Mammary epithelial cell (primary cell): ENCODE measurements at regions of chr19 and their contacts with region 1.

Region 1: DNA sequence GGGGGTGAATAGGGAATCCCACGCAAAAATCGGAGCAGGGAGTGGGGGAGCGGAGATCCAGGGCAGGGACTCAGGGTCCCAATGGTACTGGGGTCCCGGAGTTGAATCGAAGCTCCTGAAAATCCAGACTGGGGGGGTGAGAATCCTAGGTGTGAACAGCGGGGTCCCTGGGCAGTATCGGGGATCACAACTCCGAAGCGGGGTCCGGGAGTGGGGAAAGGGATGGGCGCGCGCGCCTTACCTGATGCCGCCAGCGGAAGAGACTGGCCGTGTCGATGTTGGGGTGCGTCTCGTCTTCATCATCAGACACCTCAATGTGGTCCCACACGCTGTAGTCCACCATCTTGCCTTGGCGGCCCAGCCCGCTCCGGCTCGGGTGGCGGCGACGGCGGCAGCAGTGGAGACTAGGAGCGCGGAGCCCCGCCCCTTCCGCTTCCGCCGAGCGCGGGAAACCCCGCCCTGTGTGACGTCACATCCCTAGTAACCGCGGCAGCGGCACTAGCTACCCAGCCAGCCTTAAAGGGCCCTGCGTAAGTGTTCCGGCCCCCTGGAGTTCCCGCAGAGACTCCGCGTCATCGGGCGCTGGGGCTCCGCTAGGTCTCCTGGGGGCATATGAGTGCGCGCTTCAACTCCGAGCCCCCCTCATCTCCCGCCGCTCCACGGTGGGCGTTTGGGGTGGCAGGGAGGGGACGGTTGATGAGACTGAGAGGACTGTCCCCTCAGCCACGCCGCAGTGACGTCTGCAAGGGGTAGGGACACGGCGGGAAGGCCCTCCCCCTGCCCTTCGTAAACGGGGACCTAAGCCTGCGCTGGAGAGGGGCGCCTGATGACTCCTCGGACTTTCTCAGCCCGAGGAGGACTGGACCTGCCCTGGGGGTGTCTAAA is at the start of gene CDC37:
- DNase-seq: peak; percentile 94
- H3K4me3 ChIP-seq: peak within 1 kb of the TSS; percentile 85 to 94 (median 92)
- H3K27ac ChIP-seq: peak within 1 kb of the TSS; percentile 84
- H3K4me1 ChIP-seq: peaks cover 24% of the 10 kb centered on the region
- H3K27me3 ChIP-seq: peaks cover 3% of the 10 kb centered on the region
- CTCF ChIP-seq: no peak
- total RNA-seq, gene CDC37: 114 to 217 TPM

Region 2: GRCh38 chr19:10356431-10356830 is 46.9 kb before region 1 on chr19:
- CTCF ChIA-PET with region 1: no interaction called
- dilution Hi-C with region 1: loop called (anchors 5 kb)
- in situ Hi-C with region 1: no loop called
- intact Hi-C with region 1: no loop called
- DNase-seq: no peak
- H3K4me3 ChIP-seq: no peak overlapping the region
- H3K27ac ChIP-seq: no peak overlapping the region
- H3K4me1 ChIP-seq: no peaks in the 10 kb centered on the region
- H3K27me3 ChIP-seq: no peaks in the 10 kb centered on the region
- CTCF ChIP-seq: no peak

Region 3: GRCh38 chr19:10424011-10424637 is 20.7 kb after region 1 on chr19:
- CTCF ChIA-PET with region 1: interaction called, 3 read pairs
- dilution Hi-C with region 1: no loop called
- in situ Hi-C with region 1: no loop called
- intact Hi-C with region 1: loop called (anchors 1 kb)
- DNase-seq: peak; percentile 64
- H3K4me3 ChIP-seq: peak overlapping the region in 2 of 3 experiments; percentile 18 to 29
- H3K27ac ChIP-seq: no peak overlapping the region
- H3K4me1 ChIP-seq: peaks cover 20% of the 10 kb centered on the region
- H3K27me3 ChIP-seq: peaks cover 24% of the 10 kb centered on the region
- CTCF ChIP-seq: peak; percentile 73 to 87

Region 4: DNA sequence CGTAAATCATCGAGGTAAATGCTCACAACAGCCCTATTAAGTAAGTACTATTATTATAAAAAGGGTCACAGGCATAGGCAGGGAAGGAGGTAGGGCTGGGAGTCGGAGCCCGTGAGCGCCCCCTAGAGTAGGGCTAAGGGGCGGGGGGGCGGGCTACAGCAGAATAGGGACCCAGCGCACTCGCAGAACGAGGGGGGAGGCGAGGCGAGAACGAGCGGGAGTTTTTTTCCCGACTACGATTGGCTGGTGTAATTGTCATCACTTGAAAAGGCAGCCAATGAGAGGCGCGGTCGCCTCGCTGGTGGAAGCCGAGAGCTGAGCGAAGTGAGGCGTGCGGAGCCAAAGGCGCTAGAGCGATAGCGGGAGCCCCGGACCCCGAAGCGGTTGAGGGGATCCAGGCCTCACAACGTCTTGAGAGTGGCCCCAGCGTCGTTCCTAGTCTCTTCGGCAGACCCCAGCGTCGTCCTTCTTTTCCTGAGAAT is 75.6 kb after region 1 on chr19:
- CTCF ChIA-PET with region 1: no interaction called
- dilution Hi-C with region 1: no loop called
- in situ Hi-C with region 1: no loop called
- intact Hi-C with region 1: loop called (anchors 5 kb)
- DNase-seq: peak; percentile 82
- H3K4me3 ChIP-seq: peak overlapping the region in 2 of 3 experiments; percentile 27 to 35
- H3K27ac ChIP-seq: no peak overlapping the region
- H3K4me1 ChIP-seq: peaks cover 5% of the 10 kb centered on the region
- H3K27me3 ChIP-seq: no peaks in the 10 kb centered on the region
- CTCF ChIP-seq: peak in 1 of 2 donors; percentile 39

Region 5: GRCh38 chr19:10551698-10552301 is 148.4 kb after region 1 on chr19:
- CTCF ChIA-PET with region 1: no interaction called
- dilution Hi-C with region 1: no loop called
- in situ Hi-C with region 1: no loop called
- intact Hi-C with region 1: loop called (anchors 5 kb)
- DNase-seq: peak; percentile 51
- H3K4me3 ChIP-seq: no peak overlapping the region
- H3K27ac ChIP-seq: no peak overlapping the region
- H3K4me1 ChIP-seq: peaks cover 39% of the 10 kb centered on the region
- H3K27me3 ChIP-seq: no peaks in the 10 kb centered on the region
- CTCF ChIP-seq: peak; percentile 39 to 56

Region 6: GRCh38 chr19:10625003-10625776 is 221.8 kb after region 1 on chr19 and contains the start of gene SLC44A2:
- CTCF ChIA-PET with region 1: no interaction called
- dilution Hi-C with region 1: no loop called
- in situ Hi-C with region 1: no loop called
- intact Hi-C with region 1: no loop called
- DNase-seq: peak; percentile 77
- H3K4me3 ChIP-seq: peak within 1 kb of the TSS; percentile 74 to 88 (median 77)
- H3K27ac ChIP-seq: peak within 1 kb of the TSS; percentile 40
- H3K4me1 ChIP-seq: peaks cover 20% of the 10 kb centered on the region
- H3K27me3 ChIP-seq: no peaks in the 10 kb centered on the region
- CTCF ChIP-seq: no peak
- total RNA-seq, gene SLC44A2: 64.8 to 87.9 TPM

Region 7: DNA sequence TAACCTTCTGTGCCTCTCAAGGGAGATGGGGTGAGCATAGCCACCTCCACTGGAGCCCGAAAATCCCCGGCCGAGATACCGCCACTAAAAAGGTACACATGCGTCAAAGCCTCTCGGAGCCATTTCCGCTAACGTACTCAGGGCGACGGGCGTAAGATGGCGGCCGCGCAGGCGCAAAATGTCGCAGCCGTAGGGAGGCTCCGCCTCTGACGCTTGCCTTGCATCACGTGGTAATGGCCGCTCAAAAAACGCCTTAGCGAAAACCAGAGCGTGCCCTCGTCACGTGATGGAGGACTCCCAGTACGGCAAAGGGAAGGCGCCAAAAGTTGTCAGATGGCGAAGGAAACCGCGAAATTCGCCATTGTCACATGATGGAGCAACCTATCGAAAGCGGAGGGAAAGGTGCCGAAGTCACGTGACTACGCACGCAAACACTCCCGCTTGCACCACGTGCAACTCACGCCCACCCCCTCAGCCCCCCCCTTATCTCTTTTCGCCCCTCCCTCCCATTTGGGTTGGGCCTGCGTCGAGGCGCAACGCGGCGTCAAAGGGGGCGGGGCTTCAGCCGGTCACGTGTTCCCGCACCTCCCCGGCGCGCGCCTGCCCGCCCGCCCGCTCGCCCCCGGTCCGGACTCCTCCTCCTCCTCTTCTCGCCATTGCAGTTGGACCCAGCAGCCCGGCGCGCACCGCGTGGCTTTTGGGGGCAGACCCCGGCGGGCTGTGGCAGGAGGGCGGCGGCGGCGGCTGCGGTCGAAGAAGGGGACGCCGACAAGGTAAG is 250.5 kb after region 1 on chr19 and contains the start of gene ILF3:
- CTCF ChIA-PET with region 1: no interaction called
- dilution Hi-C with region 1: no loop called
- in situ Hi-C with region 1: no loop called
- intact Hi-C with region 1: loop called (anchors 5 kb)
- DNase-seq: peak; percentile 100
- H3K4me3 ChIP-seq: peak within 1 kb of the TSS; percentile 87 to 99 (median 98)
- H3K27ac ChIP-seq: peak within 1 kb of the TSS; percentile 97
- H3K4me1 ChIP-seq: peaks cover 8% of the 10 kb centered on the region
- H3K27me3 ChIP-seq: no peaks in the 10 kb centered on the region
- CTCF ChIP-seq: no peak
- total RNA-seq, gene ILF3: 75.5 to 252 TPM

Region 8: DNA sequence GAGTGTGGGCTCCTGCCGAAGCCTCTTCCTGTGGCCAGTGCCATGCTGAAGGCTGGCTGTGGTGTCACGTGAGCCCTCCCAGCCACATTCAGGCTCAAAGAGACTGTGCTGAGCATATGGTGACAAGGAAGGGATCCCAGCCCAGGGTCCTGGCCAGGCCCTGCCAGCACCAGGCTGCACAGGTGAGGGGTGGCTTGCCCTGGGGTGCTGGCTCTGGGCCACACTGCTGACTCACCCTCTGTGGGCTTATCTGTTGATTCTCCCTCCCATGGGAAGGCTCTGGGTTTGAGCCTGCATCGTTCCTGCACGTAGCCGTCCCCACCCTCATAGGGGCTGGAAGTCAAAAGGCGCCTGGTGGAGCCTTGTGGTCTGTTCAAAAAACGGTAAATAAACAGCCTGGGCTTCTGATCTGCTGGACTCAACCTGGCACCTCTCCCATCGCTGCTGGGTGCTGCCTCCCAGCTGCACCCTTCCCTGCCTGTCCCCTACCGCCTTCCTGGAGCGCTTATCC is 345.6 kb after region 1 on chr19:
- CTCF ChIA-PET with region 1: no interaction called
- dilution Hi-C with region 1: no loop called
- in situ Hi-C with region 1: no loop called
- intact Hi-C with region 1: no loop called
- DNase-seq: peak; percentile 52
- H3K4me3 ChIP-seq: no peak overlapping the region
- H3K27ac ChIP-seq: no peak overlapping the region
- H3K4me1 ChIP-seq: peaks cover 27% of the 10 kb centered on the region
- H3K27me3 ChIP-seq: no peaks in the 10 kb centered on the region
- CTCF ChIP-seq: no peak

Region 9: GRCh38 chr19:10864538-10864899 is 461.1 kb after region 1 on chr19:
- CTCF ChIA-PET with region 1: no interaction called
- dilution Hi-C with region 1: no loop called
- in situ Hi-C with region 1: no loop called
- intact Hi-C with region 1: loop called (anchors 5 kb)
- DNase-seq: peak; percentile 47
- H3K4me3 ChIP-seq: no peak overlapping the region
- H3K27ac ChIP-seq: no peak overlapping the region
- H3K4me1 ChIP-seq: peaks cover 4% of the 10 kb centered on the region
- H3K27me3 ChIP-seq: no peaks in the 10 kb centered on the region
- CTCF ChIP-seq: peak; percentile 93 to 95